Left cardiac atrium (tissue), 4 donors: ENCODE measurements at regions of chr14 and their contacts with region 1.

Region 1: DNA sequence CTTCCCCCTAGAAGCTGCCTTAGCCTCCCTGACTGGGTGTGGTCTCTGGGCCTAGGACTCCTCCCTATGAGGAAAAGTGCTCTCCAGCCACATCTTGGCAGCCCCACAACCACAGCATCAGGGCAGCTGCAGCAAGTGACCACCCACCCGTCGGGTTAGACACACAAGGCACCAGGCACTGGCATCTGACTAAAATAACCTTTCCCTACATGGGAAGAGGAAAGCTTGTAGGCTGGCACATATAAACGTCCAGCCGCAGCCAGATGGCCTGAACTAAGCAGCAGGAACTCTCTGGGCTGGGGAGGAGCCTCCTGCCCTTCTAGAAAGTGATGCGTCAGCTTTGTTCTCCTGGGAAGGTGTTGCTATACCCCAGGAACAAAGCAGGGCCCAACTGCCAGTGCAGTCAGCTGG is 328.7 kb downstream of the DPF3 start:
- DNase-seq: peak; percentile 57
- ATAC-seq: peak; percentile 82 to 91

Region 2: GRCh38 chr14:72503696-72504368 is 61.3 kb before region 1 on chr14:
- intact Hi-C with region 1: no loop called
- DNase-seq: no peak
- ATAC-seq: no peak

Region 3: DNA sequence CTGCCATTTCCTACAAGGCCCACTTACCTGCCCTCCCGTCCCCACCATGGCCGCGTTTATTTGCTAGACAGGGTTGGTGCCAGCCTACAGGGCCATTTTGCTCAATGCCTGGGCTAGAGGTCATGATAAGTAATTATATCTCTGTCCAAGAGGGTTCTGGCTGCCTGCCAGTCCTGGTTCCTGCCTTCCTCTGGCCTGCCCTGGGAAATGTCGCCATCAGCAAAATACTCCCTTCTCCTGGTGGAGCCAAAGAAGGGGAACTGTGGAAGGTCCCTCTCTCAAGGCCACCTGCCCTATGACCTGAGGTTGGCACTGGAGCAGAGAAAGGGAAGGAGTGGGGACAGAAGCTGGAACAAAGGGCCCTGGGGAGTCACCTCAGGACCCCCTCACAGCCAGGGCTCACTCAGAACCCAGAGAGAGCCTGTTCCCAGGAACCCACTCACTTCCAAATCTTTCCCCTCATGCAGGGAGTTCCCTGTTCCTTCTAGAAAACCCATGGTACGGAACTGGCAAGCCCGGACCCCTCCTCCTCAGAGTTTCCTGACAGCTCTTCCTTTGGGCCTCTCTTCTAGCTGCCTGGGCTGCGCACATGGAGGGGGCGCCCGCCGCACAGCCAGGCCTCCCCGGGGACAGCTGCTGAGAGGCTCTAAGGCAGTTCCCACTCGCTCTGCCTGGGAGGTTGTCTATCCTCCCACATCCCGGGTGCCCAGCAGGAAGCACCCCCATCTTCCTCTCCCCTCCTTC is 48.2 kb after region 1 on chr14:
- intact Hi-C with region 1: loop called in 1 of 2 experiments (anchors 5 kb)
- DNase-seq: peak; percentile 84
- ATAC-seq: peak; percentile 56 to 60

Region 4: DNA sequence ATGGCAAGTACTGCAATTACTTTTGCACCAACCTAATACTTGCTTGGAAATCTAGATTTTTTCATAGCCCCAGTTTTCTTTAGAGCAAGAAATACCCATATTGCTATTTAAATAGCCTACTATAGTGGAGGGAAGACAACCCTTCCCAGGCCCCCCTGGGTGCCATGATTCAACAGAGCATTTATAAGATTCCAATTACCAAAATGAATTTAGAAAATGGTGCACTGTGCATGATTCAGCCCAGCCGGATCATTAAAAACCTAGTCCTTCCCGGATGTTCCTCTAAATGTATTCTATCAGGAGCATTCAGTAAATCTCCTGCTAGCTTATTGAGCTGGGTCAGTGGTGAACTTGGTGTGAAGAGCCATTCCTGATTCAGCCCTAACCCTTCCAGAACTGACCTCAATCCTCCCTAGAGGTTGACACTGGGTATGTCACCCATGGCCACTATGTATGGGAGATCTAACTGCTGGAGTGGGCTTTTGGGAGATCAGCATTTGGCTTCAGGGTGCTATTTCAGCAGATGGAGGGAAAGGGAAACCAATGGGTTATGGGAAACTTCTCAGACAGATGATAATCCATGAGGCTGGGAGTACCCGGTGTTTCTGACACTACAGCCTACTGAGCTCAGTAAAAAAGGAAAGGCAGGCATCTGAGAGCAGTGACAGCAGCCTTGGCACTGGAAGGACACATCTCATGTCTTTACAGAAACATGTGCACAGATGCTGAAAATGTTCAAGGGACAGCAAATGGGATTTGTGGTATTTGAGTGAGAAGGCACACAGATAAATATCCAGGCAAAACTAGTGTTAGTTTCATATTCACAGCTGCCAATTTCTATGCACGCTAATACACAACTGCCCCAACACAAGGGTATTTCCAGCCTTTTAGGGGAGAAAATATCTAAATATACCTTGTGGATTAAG is 69.8 kb after region 1 on chr14:
- intact Hi-C with region 1: loop called in 1 of 2 experiments (anchors 5 kb)
- DNase-seq: no peak
- ATAC-seq: no peak